PC-9 (cell line): ENCODE measurements at regions of chr5 and their contacts with region 1.

Region 1: DNA sequence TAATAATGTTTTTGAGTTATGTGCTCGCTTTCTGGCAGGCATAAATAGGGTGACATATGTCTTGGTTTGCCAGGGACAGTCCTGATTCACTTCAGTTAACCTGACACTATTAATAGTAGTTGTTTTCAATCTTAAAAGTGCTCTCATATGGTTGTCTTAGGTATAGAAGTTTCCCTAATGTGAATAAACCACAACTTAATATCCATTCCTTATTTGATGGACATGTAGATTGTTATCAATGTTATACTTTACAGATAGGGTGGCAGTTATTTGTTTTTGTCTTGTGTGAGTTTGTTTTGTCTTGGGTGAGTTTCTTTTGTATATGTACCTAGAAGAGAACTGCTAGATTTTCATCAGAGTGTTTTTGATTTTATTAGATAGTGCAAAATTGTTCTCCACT is 7.9 kb downstream of the G3BP1 start:
- DNase-seq: no peak
- H3K4me3 ChIP-seq: no peak overlapping the region
- H3K27ac ChIP-seq: no peak overlapping the region
- H3K4me1 ChIP-seq: peaks cover 39% of the 10 kb centered on the region
- H3K27me3 ChIP-seq: no peaks in the 10 kb centered on the region
- CTCF ChIP-seq: no peak

Region 2: DNA sequence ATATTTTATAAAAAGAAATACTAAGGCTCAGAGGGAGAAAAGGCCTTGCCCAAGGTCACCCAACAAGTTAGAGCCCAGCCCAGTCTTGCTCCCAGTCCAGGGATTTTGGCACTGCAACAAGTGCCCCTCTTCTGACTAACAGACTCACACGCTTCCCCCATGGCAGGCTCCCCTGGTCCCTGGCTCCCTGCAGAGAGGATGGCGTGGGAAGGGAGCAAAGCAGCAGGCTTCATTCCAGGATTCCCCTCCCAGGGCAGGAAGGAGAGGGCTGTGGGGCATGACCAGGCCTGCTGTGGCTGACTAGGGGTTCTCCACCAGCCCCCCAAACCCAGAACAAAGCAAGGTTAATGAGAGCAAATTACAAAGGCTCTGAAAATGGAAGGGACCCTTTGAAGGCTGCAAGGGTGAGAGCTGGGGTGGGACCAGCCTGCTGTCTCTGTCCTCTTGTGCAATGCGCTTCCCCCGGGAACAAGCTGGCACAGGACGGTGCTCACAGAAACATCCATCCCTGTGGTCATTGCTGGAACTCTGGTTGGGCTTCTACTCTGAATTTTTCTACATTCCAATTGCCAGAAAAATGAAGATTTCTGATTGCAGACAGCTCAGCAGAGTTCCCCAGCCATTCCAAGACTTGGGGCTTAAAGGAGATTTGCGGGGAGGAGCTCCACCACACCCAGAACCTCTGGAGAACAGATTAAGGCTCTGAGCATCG is 151.4 kb before region 1 on chr5:
- CTCF ChIA-PET with region 1: no interaction called
- POLR2A ChIA-PET with region 1: no interaction called
- intact Hi-C with region 1: no loop called
- DNase-seq: no peak
- H3K4me3 ChIP-seq: no peak overlapping the region
- H3K27ac ChIP-seq: no peak overlapping the region
- H3K4me1 ChIP-seq: no peaks in the 10 kb centered on the region
- H3K27me3 ChIP-seq: 0 out of 2 replicates have a peak, but pooled peaks cover 8% of the 10 kb centered on the region
- CTCF ChIP-seq: no peak

Region 3: GRCh38 chr5:151805414-151806223 is 26.0 kb after region 1 on chr5:
- CTCF ChIA-PET with region 1: no interaction called
- POLR2A ChIA-PET with region 1: no interaction called
- intact Hi-C with region 1: loop called (anchors 2 kb)
- DNase-seq: no peak
- H3K4me3 ChIP-seq: no peak overlapping the region
- H3K27ac ChIP-seq: no peak overlapping the region
- H3K4me1 ChIP-seq: no peaks in the 10 kb centered on the region
- H3K27me3 ChIP-seq: no peaks in the 10 kb centered on the region
- CTCF ChIP-seq: no peak